ENCODE measurements at regions of chr20 and their contacts with region 1.

Region 1: GRCh38 chr20:51624157-51624731 is 81.7 kb upstream of the NFATC2 start:
- DNase-seq: peak in 6 of 10 donors; percentile 34 to 65 (median 52)
- H3K4me3 ChIP-seq: no peak overlapping the region
- H3K27ac ChIP-seq: no peak overlapping the region
- H3K27me3 ChIP-seq: no peaks in the 10 kb centered on the region
- CTCF ChIP-seq: peak in 55 of 56 donors; percentile 32 to 69 (median 56)

Region 2: DNA sequence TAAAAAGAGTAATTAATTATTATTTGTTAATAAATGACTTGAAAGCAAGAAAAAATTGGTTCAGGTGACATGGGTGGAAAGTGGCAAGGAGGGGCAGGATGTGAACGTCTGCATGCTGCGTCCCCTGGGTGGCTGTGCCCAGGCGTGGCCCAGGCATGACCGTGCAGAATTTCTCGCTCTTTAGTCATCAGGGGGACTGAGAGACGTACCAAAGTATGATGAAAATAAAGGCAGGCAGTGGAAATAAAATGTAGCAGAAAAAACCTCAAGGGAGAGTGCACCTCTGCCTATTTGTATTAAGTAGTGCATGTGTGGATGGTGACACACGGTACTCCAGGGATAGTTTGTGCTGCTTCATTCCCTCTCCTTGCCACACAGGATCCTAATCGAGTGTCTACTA is 62.8 kb after region 1 on chr20:
- intact Hi-C with region 1: loop called in 1 of 2 experiments (anchors 10 kb)
- DNase-seq: no peak
- H3K4me3 ChIP-seq: no peak overlapping the region
- H3K27ac ChIP-seq: no peak overlapping the region
- H3K27me3 ChIP-seq: no peaks in the 10 kb centered on the region
- CTCF ChIP-seq: no peak

Measured in dorsolateral prefrontal cortex (tissue), 120 donors.